Upper lobe of right lung (tissue), 1 donor: ENCODE measurements at regions of chr22 and their contacts with region 1.

Region 1: DNA sequence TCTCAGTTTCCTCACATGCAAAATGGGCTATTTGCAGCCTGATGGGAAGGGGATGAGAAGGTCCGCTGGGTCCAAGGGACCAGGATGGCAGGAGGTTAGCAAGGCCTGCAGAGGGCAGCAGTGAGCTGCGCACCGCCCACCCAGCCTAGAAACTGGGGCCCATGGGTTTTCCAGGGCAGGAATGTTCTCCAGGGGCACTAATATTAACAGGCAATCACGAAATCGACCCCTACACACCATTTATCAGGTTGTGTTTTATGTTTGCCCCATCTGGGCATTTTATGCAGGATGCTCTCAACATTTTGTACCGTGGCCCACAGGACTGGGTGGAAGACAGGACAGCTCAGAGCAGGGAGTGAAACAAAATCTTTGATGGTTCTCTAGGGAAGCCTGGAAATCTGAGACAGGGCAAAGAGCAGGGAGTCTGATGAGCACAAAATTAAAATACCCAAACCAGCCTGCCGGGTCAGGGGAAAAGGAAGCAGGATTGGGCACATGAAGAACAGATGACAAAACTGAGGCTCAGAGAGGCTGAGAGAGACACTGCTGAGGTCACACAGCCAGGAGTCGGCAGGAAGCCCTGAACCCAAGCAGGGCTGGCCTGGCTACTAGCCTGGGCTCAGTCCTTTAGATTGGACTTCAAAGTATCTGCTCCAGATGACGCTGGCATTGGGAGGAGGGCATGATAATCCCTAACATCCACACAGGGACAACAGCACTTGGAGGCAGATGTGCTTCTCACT is 1.6 kb upstream of the BCR start:
- DNase-seq: peak; percentile 84
- ATAC-seq: peak; percentile 70
- H3K4me3 ChIP-seq: no peak overlapping the region
- H3K27ac ChIP-seq: no peak overlapping the region
- H3K4me1 ChIP-seq: peaks cover 37% of the 10 kb centered on the region
- H3K27me3 ChIP-seq: no peaks in the 10 kb centered on the region
- CTCF ChIP-seq: peak; percentile 98

Region 2: GRCh38 chr22:23219822-23220484 is 41.3 kb after region 1 on chr22:
- intact Hi-C with region 1: loop called (anchors 5 kb)
- DNase-seq: peak; percentile 77
- ATAC-seq: peak; percentile 69
- H3K4me3 ChIP-seq: no peak overlapping the region
- H3K27ac ChIP-seq: peak overlapping the region; percentile 78
- H3K4me1 ChIP-seq: peaks cover 93% of the 10 kb centered on the region
- H3K27me3 ChIP-seq: no peaks in the 10 kb centered on the region
- CTCF ChIP-seq: no peak

Region 3: GRCh38 chr22:23225724-23226496 is 47.2 kb after region 1 on chr22:
- intact Hi-C with region 1: loop called (anchors 2 kb)
- DNase-seq: peak; percentile 85
- ATAC-seq: peak; percentile 79
- H3K4me3 ChIP-seq: no peak overlapping the region
- H3K27ac ChIP-seq: peak overlapping the region; percentile 70
- H3K4me1 ChIP-seq: peaks cover 62% of the 10 kb centered on the region
- H3K27me3 ChIP-seq: no peaks in the 10 kb centered on the region
- CTCF ChIP-seq: no peak

Region 4: DNA sequence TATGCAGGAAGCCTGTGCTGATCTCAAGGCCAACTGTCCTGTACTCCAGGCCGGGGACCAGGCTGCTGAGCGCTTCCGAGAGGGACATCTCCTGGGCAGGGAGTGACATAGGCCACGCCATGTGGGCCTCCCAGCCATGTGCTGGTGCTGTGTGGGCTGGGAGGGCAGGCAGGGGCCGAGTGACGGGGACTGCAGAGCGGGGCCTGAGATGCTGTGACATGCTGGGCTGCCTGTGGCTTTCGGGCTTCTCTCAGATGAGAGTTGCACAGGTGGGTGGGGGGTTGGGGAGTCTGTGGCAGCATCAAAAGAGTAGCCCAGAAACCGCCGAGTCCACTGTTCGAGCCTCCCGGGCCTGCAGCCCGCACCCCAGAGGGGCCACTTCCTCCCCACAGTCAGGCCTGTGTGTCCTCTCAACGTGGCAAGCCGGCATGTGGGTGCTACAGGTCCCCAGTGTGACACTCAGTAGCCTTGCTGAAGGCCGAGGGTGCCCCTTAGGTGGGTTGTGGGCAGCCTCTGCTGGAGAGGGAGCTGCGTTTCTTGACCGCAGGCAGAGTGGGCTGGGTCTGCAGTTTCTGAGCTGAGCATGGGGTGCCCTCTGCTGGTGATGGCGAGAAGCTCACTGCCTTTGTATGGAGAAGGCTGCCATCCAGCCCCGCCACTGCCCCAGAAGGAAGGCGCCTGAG is 102.9 kb after region 1 on chr22:
- intact Hi-C with region 1: loop called (anchors 2 kb)
- DNase-seq: peak; percentile 90
- ATAC-seq: peak; percentile 78
- H3K4me3 ChIP-seq: no peak overlapping the region
- H3K27ac ChIP-seq: peak overlapping the region; percentile 76
- H3K4me1 ChIP-seq: peaks cover 29% of the 10 kb centered on the region
- H3K27me3 ChIP-seq: no peaks in the 10 kb centered on the region
- CTCF ChIP-seq: peak; percentile 94

Region 5: GRCh38 chr22:23385291-23386244 is 206.9 kb after region 1 on chr22:
- intact Hi-C with region 1: loop called (anchors 10 kb)
- DNase-seq: peak; percentile 90
- ATAC-seq: peak; percentile 84
- H3K4me3 ChIP-seq: no peak overlapping the region
- H3K27ac ChIP-seq: no peak overlapping the region
- H3K4me1 ChIP-seq: peaks cover 6% of the 10 kb centered on the region
- H3K27me3 ChIP-seq: no peaks in the 10 kb centered on the region
- CTCF ChIP-seq: peak; percentile 99